Activated CD8-positive, alpha-beta T cell treated with anti-CD3 and anti-CD28 coated beads, Interleukin-2, amount 10 ng/mL, durations not matched to agents 7 days and 5 days (primary cell): ENCODE measurements at regions of chr10 and their contacts with region 1.

Region 1: GRCh38 chr10:102072673-102073527 is 7.8 kb downstream of the HPS6 start:
- DNase-seq: peak; percentile 87
- ATAC-seq: peak; percentile 95
- H3K4me3 Mint-ChIP-seq: no peak overlapping the region
- H3K27ac Mint-ChIP-seq: no peak overlapping the region
- H3K4me1 Mint-ChIP-seq: peaks cover under 1% of the 10 kb centered on the region
- H3K27me3 Mint-ChIP-seq: no peaks in the 10 kb centered on the region

Region 2: DNA sequence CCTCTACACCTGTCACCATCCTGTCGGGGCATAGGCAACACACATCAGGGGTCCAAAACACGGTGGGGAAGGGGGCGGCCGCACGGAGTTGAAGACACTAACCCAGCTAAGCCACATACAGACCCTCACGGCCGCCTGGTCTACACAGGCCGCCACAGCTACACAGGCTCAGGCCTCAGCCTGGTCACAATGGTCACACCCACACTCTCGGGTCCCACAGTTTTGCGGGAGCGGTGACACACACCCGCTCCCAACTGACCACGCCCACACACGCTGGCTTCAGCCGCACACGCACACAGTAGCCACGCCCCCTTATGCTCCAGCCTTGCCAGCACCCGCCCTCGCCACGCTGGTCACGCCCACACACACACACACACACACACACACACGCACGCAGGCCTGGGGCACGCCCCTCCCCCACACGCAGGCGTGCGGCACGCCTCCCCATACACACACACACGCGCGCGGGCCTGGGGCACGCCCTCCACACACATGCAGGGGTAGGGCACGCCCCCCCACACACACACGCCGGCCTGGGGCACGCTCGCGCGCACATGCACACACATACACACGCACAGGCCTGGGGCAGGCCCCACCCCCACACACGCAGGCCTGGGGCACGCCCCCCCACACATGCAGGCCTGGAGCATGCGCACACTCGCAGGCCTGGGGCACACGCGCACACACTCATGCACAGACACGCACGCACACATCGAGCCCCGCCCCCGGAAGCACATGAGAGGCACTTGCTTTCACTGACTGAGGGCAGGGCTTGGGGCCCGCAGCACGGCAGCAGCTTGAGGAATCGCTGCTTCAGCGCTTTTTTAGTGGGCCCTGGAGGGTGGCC is 242.4 kb before region 1 on chr10:
- CTCF ChIA-PET with region 1: interaction called, 24 read pairs
- POLR2A ChIA-PET with region 1: no interaction called
- DNase-seq: peak; percentile 92
- ATAC-seq: peak; percentile 84
- H3K4me3 Mint-ChIP-seq: peak overlapping the region; percentile 66
- H3K27ac Mint-ChIP-seq: peak overlapping the region; percentile 82
- H3K4me1 Mint-ChIP-seq: peaks cover 52% of the 10 kb centered on the region
- H3K27me3 Mint-ChIP-seq: no peaks in the 10 kb centered on the region

Region 3: GRCh38 chr10:101889256-101890210 is 183.4 kb before region 1 on chr10:
- CTCF ChIA-PET with region 1: interaction called, 30 read pairs
- POLR2A ChIA-PET with region 1: no interaction called
- DNase-seq: peak; percentile 82
- ATAC-seq: peak; percentile 58
- H3K4me3 Mint-ChIP-seq: no peak overlapping the region
- H3K27ac Mint-ChIP-seq: no peak overlapping the region
- H3K4me1 Mint-ChIP-seq: no peaks in the 10 kb centered on the region
- H3K27me3 Mint-ChIP-seq: no peaks in the 10 kb centered on the region

Region 4: GRCh38 chr10:102055647-102056419 is 17.1 kb before region 1 on chr10 and contains the start of gene ARMH3:
- CTCF ChIA-PET with region 1: interaction called, 11 read pairs
- POLR2A ChIA-PET with region 1: interaction called, 6 read pairs
- DNase-seq: peak; percentile 95
- ATAC-seq: peak; percentile 96
- H3K4me3 Mint-ChIP-seq: peak within 1 kb of the TSS; percentile 98
- H3K27ac Mint-ChIP-seq: peak within 1 kb of the TSS; percentile 98
- H3K4me1 Mint-ChIP-seq: peaks cover 39% of the 10 kb centered on the region
- H3K27me3 Mint-ChIP-seq: no peaks in the 10 kb centered on the region
- total RNA-seq, gene ARMH3: 25.2 to 26.3 TPM

Region 5: GRCh38 chr10:102085336-102085735 is 12.4 kb after region 1 on chr10:
- CTCF ChIA-PET with region 1: interaction called, 19 read pairs
- POLR2A ChIA-PET with region 1: no interaction called
- DNase-seq: no peak
- ATAC-seq: no peak
- H3K4me3 Mint-ChIP-seq: no peak overlapping the region
- H3K27ac Mint-ChIP-seq: no peak overlapping the region
- H3K4me1 Mint-ChIP-seq: no peaks in the 10 kb centered on the region
- H3K27me3 Mint-ChIP-seq: no peaks in the 10 kb centered on the region

Region 6: GRCh38 chr10:102114861-102115618 is 42.1 kb after region 1 on chr10:
- CTCF ChIA-PET with region 1: interaction called, 15 read pairs
- POLR2A ChIA-PET with region 1: no interaction called
- DNase-seq: peak; percentile 91
- ATAC-seq: peak; percentile 75
- H3K4me3 Mint-ChIP-seq: peak overlapping the region; percentile 91
- H3K27ac Mint-ChIP-seq: peak overlapping the region; percentile 93
- H3K4me1 Mint-ChIP-seq: peaks cover 63% of the 10 kb centered on the region
- H3K27me3 Mint-ChIP-seq: no peaks in the 10 kb centered on the region

Region 7: DNA sequence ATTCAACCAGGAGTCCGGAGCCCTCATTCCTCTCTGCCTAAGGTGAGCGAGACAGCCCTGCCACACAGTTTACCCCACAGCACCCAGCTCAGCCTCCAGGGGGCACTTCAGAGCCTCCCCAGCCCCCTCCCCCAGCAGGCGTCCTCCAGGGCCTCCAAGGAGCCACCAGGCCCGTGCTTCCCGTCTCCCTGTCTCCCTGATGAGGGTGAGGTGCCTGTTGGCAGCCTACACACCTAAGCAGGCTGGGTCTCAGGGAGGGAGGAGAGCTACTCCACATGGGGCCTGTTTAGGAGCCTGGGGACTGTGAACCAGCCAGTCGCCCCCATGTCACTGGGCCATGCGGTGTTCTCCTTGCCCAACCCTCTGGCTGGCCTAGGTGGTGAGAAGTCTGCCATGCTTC is 542.5 kb after region 1 on chr10:
- CTCF ChIA-PET with region 1: no interaction called
- POLR2A ChIA-PET with region 1: no interaction called
- DNase-seq: peak; percentile 33
- ATAC-seq: no peak
- H3K4me3 Mint-ChIP-seq: no peak overlapping the region
- H3K27ac Mint-ChIP-seq: peak overlapping the region; percentile 65
- H3K4me1 Mint-ChIP-seq: peaks cover 51% of the 10 kb centered on the region
- H3K27me3 Mint-ChIP-seq: no peaks in the 10 kb centered on the region